ENCODE measurements at regions of chr11 and their contacts with region 1.

Region 1: GRCh38 chr11:28259177-28259843 is 151.1 kb downstream of the METTL15 start:
- DNase-seq: no peak
- ATAC-seq: no peak
- H3K4me3 Mint-ChIP-seq: no peak overlapping the region
- H3K27ac Mint-ChIP-seq: no peak overlapping the region
- H3K4me1 Mint-ChIP-seq: no peaks in the 10 kb centered on the region
- H3K27me3 Mint-ChIP-seq: no peaks in the 10 kb centered on the region

Region 2: GRCh38 chr11:28176231-28176853 is 83.0 kb before region 1 on chr11:
- CTCF ChIA-PET with region 1: no interaction called
- POLR2A ChIA-PET with region 1: interaction called, 10 read pairs
- intact Hi-C with region 1: no loop called
- DNase-seq: no peak
- ATAC-seq: no peak
- H3K4me3 Mint-ChIP-seq: no peak overlapping the region
- H3K27ac Mint-ChIP-seq: no peak overlapping the region
- H3K4me1 Mint-ChIP-seq: no peaks in the 10 kb centered on the region
- H3K27me3 Mint-ChIP-seq: no peaks in the 10 kb centered on the region

Region 3: GRCh38 chr11:28296426-28296825 is 37.1 kb after region 1 on chr11:
- CTCF ChIA-PET with region 1: no interaction called
- POLR2A ChIA-PET with region 1: no interaction called
- intact Hi-C with region 1: no loop called
- DNase-seq: no peak
- ATAC-seq: peak; percentile 19
- H3K4me3 Mint-ChIP-seq: no peak overlapping the region
- H3K27ac Mint-ChIP-seq: no peak overlapping the region
- H3K4me1 Mint-ChIP-seq: no peaks in the 10 kb centered on the region
- H3K27me3 Mint-ChIP-seq: no peaks in the 10 kb centered on the region

Region 4: GRCh38 chr11:28384418-28384817 is 125.1 kb after region 1 on chr11:
- CTCF ChIA-PET with region 1: no interaction called
- POLR2A ChIA-PET with region 1: no interaction called
- intact Hi-C with region 1: no loop called
- DNase-seq: no peak
- ATAC-seq: no peak
- H3K4me3 Mint-ChIP-seq: no peak overlapping the region
- H3K27ac Mint-ChIP-seq: no peak overlapping the region
- H3K4me1 Mint-ChIP-seq: no peaks in the 10 kb centered on the region
- H3K27me3 Mint-ChIP-seq: no peaks in the 10 kb centered on the region

Measured in activated CD4-positive, alpha-beta T cell treated with anti-CD3 and anti-CD28 coated beads for 36 hours (primary cell).